WTC11 (cell line): ENCODE measurements at regions of chr20 and their contacts with region 1.

Region 1: GRCh38 chr20:14790771-14791620 is 453.6 kb upstream of the FLRT3 start:
- DNase-seq: no peak
- ATAC-seq: no peak
- H3K4me3 Mint-ChIP-seq: no peak overlapping the region
- H3K27ac Mint-ChIP-seq: no peak overlapping the region
- H3K4me1 Mint-ChIP-seq: peaks cover 3% of the 10 kb centered on the region; the same call in 1 of the 2 replicates
- H3K27me3 Mint-ChIP-seq: no peaks in the 10 kb centered on the region
- CTCF ChIP-seq: no peak

Region 2: DNA sequence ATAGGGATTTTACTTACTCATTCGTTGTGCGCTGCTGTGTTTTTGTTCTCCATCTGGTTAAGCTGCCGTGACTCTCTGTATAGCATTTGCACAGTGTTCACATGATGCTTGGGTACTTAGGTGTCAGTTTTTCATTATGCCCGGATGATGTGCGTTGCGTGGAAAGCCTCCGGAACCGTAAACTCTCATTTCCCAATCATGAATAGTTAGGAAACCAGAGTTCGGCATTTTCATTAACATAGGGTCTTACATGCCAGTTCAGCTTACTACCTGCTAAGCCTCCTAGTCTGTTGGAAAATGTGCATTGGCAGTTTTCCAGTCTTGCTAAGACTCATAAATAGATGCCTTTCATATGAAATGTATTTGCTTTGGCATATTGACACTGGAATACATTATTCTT is 29.8 kb after region 1 on chr20:
- CTCF ChIA-PET with region 1: no interaction called
- POLR2A ChIA-PET with region 1: interaction called, 11 read pairs
- DNase-seq: no peak
- ATAC-seq: no peak
- H3K4me3 Mint-ChIP-seq: no peak overlapping the region
- H3K27ac Mint-ChIP-seq: no peak overlapping the region
- H3K4me1 Mint-ChIP-seq: peaks cover 8% of the 10 kb centered on the region
- H3K27me3 Mint-ChIP-seq: no peaks in the 10 kb centered on the region
- CTCF ChIP-seq: no peak

Region 3: GRCh38 chr20:14860410-14860814 is 69.4 kb after region 1 on chr20:
- CTCF ChIA-PET with region 1: no interaction called
- POLR2A ChIA-PET with region 1: no interaction called
- DNase-seq: peak; percentile 46
- ATAC-seq: peak; percentile 93
- H3K4me3 Mint-ChIP-seq: no peak overlapping the region
- H3K27ac Mint-ChIP-seq: peak overlapping the region; percentile 65
- H3K4me1 Mint-ChIP-seq: peaks cover 32% of the 10 kb centered on the region
- H3K27me3 Mint-ChIP-seq: peaks cover 64% of the 10 kb centered on the region
- CTCF ChIP-seq: no peak